Prostate gland (tissue), 2 donors: ENCODE measurements at regions of chr1 and their contacts with region 1.

Region 1: DNA sequence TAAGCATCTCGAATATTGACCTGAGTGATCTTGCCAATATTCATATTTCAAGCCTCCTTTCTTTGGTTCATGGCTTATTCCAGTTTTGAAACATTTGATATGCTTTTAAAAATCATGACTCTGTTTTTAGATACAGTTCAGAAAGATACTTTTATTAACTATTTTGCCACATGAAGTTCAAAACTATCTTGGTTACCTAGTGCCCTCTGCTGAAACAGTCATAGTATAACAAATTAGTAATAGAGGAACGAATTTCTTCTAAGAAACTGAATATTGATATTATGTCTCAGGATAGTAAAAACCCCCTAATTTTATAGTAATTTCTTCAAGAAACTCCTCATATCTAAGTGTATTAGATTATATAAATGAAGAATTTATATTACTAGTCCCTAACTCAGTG is 52.6 kb upstream of the RC3H1 start:
- DNase-seq: no peak
- H3K4me3 ChIP-seq: no peak overlapping the region
- H3K27ac ChIP-seq: no peak overlapping the region
- H3K4me1 ChIP-seq: no peaks in the 10 kb centered on the region
- H3K27me3 ChIP-seq: no peaks in the 10 kb centered on the region
- CTCF ChIP-seq: peak in 3 of 4 experiments; percentile 20 to 34 (median 33)
- POLR2A ChIP-seq: no peak

Region 2: GRCh38 chr1:173970252-173970651 is 104.5 kb before region 1 on chr1:
- intact Hi-C with region 1: loop called (anchors 10 kb)
- DNase-seq: no peak
- H3K4me3 ChIP-seq: no peak overlapping the region
- H3K27ac ChIP-seq: no peak overlapping the region
- H3K4me1 ChIP-seq: no peaks in the 10 kb centered on the region
- H3K27me3 ChIP-seq: no peaks in the 10 kb centered on the region
- CTCF ChIP-seq: no peak
- POLR2A ChIP-seq: no peak

Region 3: GRCh38 chr1:174005032-174005431 is 69.7 kb before region 1 on chr1:
- intact Hi-C with region 1: no loop called
- DNase-seq: no peak
- H3K4me3 ChIP-seq: no peak overlapping the region
- H3K27ac ChIP-seq: no peak overlapping the region
- H3K4me1 ChIP-seq: no peaks in the 10 kb centered on the region
- H3K27me3 ChIP-seq: no peaks in the 10 kb centered on the region
- CTCF ChIP-seq: no peak
- POLR2A ChIP-seq: no peak